Prostate gland (tissue), 2 donors: ENCODE measurements at regions of chr1 and their contacts with region 1.

Region 1: GRCh38 chr1:87292684-87293493 is 35.8 kb upstream of the LMO4 start:
- DNase-seq: peak; percentile 49
- H3K4me3 ChIP-seq: no peak overlapping the region
- H3K27ac ChIP-seq: no peak overlapping the region
- H3K4me1 ChIP-seq: no peaks in the 10 kb centered on the region
- H3K27me3 ChIP-seq: no peaks in the 10 kb centered on the region
- CTCF ChIP-seq: peak; percentile 50 to 83 (median 71)
- POLR2A ChIP-seq: no peak

Region 2: DNA sequence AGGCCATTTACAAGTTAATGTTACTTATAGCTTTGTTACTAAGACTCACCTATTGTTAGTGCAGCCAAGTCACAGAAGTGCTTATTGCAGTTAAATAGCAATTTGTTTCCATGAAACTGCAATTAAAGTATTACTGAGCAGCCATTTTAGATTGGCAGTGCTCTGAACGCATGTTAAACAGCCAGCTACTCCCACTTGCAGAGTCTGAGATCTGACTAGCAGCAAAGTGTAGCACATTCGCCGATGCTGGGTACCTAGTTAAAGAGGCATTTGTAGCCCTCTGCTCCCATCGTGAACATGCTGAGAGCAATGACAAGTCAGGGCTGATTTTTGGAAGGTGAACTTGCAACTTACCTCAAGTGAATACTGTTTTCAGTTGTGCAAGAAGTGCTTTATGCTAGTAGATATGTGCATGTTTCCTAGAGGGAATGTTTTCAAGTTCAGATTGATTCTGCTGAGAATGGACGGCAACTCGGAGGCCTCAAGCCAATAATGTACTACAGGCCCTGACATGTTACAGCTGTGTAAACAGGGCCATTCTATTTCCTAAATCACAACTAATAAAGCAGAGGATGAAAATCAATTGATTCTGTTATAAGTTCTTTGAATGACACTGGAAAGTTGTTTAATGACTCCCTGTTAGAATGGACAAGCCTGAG is 55.6 kb after region 1 on chr1:
- intact Hi-C with region 1: no loop called
- DNase-seq: no peak
- H3K4me3 ChIP-seq: no peak overlapping the region
- H3K27ac ChIP-seq: no peak overlapping the region
- H3K4me1 ChIP-seq: no peaks in the 10 kb centered on the region
- H3K27me3 ChIP-seq: no peaks in the 10 kb centered on the region
- CTCF ChIP-seq: no peak
- POLR2A ChIP-seq: no peak

Region 3: GRCh38 chr1:87392248-87393192 is 99.6 kb after region 1 on chr1:
- intact Hi-C with region 1: no loop called
- DNase-seq: no peak
- H3K4me3 ChIP-seq: no peak overlapping the region
- H3K27ac ChIP-seq: no peak overlapping the region
- H3K4me1 ChIP-seq: no peaks in the 10 kb centered on the region
- H3K27me3 ChIP-seq: no peaks in the 10 kb centered on the region
- CTCF ChIP-seq: no peak
- POLR2A ChIP-seq: no peak

Region 4: DNA sequence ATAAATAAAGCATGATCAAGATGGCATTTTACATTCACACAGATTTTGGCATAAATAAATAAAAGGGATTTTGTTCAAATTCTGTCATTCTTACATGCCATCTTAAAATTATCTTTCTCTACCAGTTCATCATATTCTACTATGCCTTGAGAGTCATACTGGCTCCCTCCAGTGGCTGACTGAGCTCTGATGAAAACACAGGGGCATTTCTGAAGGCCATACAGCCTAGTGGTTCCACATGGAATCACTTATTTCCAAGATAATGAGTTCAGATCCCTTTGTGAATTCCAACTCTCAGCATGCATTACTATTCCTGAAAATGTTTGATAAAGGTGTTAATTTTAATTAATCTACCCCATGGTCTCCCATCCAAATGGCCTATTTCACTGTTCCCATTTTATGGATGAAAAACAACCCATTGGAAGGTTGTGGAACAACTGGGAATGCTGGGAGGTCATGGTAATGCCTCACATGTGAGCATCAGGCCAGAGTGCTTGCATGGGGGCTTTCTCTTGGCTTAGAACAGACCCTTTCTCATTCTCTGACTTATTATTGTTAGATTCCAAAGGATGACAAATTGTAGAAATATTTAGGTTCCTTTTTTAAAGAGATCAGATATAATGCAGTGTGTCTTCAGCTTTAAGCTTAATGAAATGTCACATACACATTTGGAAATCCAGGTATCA is 768.7 kb after region 1 on chr1:
- intact Hi-C with region 1: loop called (anchors 5 kb)
- DNase-seq: peak; percentile 36
- H3K4me3 ChIP-seq: no peak overlapping the region
- H3K27ac ChIP-seq: no peak overlapping the region
- H3K4me1 ChIP-seq: no peaks in the 10 kb centered on the region
- H3K27me3 ChIP-seq: no peaks in the 10 kb centered on the region
- CTCF ChIP-seq: peak in 3 of 4 experiments; percentile 45 to 70 (median 62)
- POLR2A ChIP-seq: no peak